Gastrocnemius medialis (tissue), 4 donors: ENCODE measurements at regions of chr11 and their contacts with region 1.

Region 1: GRCh38 chr11:69888483-69889076 is 69.4 kb upstream of the FGF3 start:
- DNase-seq: peak; percentile 18 to 25
- ATAC-seq: peak in 1 of 2 donors; percentile 74
- H3K4me3 ChIP-seq: no peak overlapping the region
- H3K27ac ChIP-seq: no peak overlapping the region
- H3K4me1 ChIP-seq: no peaks in the 10 kb centered on the region
- H3K27me3 ChIP-seq: peaks cover 4 to 17% (median 11%) of the 10 kb centered on the region in 3 donors
- CTCF ChIP-seq: peak; percentile 35 to 78 (median 70)
- POLR2A ChIP-seq: no peak

Region 2: DNA sequence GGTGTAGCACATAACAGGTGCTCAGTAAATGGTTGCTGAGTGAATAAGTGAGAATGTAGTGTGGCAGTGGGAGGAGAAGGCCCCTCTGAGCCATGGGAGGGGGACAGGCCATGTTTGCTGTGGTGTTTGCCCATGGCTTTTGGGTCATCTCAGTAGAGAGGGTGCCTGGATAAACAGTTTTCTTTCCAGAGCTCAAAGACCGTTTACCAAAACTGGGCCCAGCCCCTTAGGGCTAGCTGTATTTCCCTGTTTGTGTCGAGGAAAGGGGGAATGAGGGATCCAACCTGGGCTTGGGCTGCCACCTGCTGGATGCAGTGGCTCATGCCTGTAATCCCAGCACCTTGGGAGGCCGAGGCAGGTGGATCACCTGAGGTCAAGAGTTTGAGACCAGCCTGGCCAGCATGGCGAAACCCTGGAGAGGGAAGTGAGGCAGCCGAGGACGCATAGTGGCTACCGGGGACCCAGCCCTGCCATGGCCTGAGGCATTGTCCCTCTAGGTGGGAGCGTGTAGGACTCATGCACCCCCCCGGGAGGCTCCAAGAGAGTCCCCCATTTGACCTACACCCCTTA is 204.7 kb before region 1 on chr11:
- in situ Hi-C with region 1: loop called in 3 of 4 experiments (anchors 5 to 25 kb)
- intact Hi-C with region 1: loop called (anchors 1 kb)
- DNase-seq: no peak
- ATAC-seq: no peak
- H3K4me3 ChIP-seq: no peak overlapping the region
- H3K27ac ChIP-seq: no peak overlapping the region
- H3K4me1 ChIP-seq: peaks cover 0 to 8% of the 10 kb centered on the region in 2 donors
- H3K27me3 ChIP-seq: peaks cover 0 to 2% (median 0%) of the 10 kb centered on the region in 3 donors
- CTCF ChIP-seq: no peak
- POLR2A ChIP-seq: no peak

Region 3: GRCh38 chr11:69700278-69701140 is 188.1 kb before region 1 on chr11:
- in situ Hi-C with region 1: loop called in 2 of 4 experiments (anchors 10 to 25 kb)
- intact Hi-C with region 1: loop called (anchors 5 kb)
- DNase-seq: no peak
- ATAC-seq: no peak
- H3K4me3 ChIP-seq: no peak overlapping the region
- H3K27ac ChIP-seq: no peak overlapping the region
- H3K4me1 ChIP-seq: no peaks in the 10 kb centered on the region
- H3K27me3 ChIP-seq: peaks cover 48 to 65% (median 64%) of the 10 kb centered on the region in 3 donors
- CTCF ChIP-seq: no peak
- POLR2A ChIP-seq: no peak